WTC11 (cell line): ENCODE measurements at regions of chr7 and their contacts with region 1.

Region 1: DNA sequence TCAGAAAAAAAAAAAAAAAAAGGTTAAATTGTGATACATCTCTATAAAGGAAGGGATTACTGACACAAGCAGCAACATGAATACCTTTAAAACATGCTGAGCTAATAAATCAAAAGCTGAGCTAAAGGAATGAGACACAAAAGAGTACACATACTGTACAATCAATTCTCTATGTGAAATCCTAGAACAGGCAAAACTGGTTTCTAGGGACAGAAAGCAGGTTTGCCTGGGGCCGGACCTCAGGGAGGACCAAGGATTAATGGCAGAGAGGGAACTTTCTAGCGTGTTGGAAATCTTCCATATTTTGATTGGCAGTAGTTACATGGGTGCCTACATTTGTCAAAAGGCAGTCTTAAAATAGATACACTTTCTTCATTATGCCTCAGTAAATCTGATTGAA is 52.5 kb downstream of the KLRG2 start:
- DNase-seq: no peak
- ATAC-seq: no peak
- H3K4me3 Mint-ChIP-seq: no peak overlapping the region
- H3K27ac Mint-ChIP-seq: no peak overlapping the region
- H3K4me1 Mint-ChIP-seq: peaks cover 13% of the 10 kb centered on the region
- H3K27me3 Mint-ChIP-seq: no peaks in the 10 kb centered on the region
- CTCF ChIP-seq: no peak

Region 2: DNA sequence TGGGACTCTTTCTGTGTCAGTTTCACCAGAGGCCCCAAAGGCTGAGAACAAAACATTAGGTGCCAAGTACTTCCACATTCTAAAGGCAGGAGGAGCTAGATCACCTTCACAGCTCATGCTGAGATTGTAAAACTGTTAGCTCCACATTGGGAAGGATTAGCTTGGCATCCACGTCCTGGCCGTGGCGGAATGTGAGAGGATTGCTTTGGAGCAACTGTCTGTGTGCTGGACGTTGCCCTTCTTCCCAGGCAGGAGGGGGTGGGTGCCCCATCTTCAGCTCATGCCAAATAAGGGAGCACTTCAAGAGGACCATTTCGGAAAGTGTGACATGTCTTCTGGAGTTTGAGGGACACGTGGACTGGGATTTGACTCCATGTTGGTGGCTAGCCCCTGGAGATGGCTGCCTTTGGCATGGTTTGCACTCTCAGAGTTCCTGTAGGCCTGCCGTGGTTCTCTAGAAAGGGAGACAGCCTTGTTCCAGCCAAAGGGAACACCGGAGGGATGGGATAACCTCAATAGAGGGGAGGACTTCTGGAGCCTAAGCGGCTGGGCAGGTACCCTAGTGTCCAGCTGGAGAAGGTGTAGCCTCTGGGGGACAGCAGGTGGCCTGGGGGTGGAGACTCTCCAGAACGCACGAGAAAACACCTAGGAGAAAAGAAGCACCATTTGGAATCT is 109.8 kb before region 1 on chr7:
- CTCF ChIA-PET with region 1: interaction called, 21 read pairs
- POLR2A ChIA-PET with region 1: no interaction called
- DNase-seq: peak; percentile 18
- ATAC-seq: peak; percentile 77
- H3K4me3 Mint-ChIP-seq: no peak overlapping the region
- H3K27ac Mint-ChIP-seq: peak overlapping the region; percentile 63; the same call in 1 of the 2 replicates
- H3K4me1 Mint-ChIP-seq: peaks cover 8% of the 10 kb centered on the region
- H3K27me3 Mint-ChIP-seq: no peaks in the 10 kb centered on the region
- CTCF ChIP-seq: no peak

Region 3: DNA sequence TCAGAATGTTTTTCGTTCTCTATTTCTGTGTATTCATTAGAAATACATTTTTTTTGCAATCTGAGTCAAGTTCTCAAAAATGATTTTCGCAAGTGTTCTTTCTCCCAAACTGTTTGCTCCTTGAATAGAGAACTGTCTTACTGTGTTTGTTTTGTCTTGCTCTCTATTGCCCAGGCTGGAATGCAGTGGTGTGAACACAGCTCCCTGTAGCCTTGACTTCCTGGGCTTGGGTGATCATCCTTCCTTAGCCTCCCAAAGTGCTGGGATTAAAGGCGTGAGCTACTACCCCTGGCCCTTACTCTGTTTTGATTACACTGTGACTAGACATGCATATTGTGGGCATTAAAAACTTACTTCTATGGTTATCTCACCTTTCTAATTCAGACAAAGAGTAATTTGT is 14.6 kb before region 1 on chr7:
- CTCF ChIA-PET with region 1: interaction called, 43 read pairs
- POLR2A ChIA-PET with region 1: no interaction called
- DNase-seq: no peak
- ATAC-seq: no peak
- H3K4me3 Mint-ChIP-seq: no peak overlapping the region
- H3K27ac Mint-ChIP-seq: peak overlapping the region; percentile 66
- H3K4me1 Mint-ChIP-seq: no peaks in the 10 kb centered on the region
- H3K27me3 Mint-ChIP-seq: no peaks in the 10 kb centered on the region
- CTCF ChIP-seq: no peak

Region 4: DNA sequence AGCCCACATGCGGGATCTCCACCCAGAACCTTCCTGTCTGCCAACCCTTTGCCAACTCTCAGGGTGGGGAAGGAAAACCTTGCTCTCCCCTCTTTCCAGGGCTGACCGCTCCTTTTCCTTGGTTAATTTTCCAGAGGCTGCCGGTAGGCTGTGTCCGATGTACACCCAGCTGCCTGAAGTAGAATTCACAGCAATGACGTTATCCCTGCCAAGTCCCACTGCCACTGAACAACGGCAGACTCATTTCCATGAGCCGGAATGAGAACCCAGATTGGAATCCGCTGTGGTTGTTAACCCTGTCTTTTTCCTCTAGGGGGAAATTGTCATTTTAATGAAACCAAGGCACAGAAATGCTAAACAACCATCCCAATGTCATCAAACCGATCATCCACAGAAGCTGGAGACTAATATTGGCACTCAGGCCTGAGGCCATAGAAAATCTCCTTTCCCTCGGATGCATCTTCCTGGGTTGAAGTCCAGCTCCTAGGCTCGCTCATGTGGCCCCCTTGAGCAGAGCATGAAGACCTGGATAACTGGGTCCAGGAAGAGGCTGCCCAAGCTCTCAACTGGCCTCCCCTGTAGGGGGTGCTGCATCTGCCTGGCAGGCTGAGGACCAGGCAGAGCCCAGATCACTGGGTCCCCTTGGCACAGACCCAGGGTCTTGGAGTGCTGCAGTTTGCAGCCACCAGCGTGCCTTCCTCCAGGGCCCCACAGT is 22.1 kb after region 1 on chr7:
- CTCF ChIA-PET with region 1: interaction called, 34 read pairs
- POLR2A ChIA-PET with region 1: no interaction called
- DNase-seq: peak; percentile 35
- ATAC-seq: peak; percentile 70
- H3K4me3 Mint-ChIP-seq: no peak overlapping the region
- H3K27ac Mint-ChIP-seq: 0 out of 2 replicates have a peak overlapping the region, but pooled peaks have one; percentile 34
- H3K4me1 Mint-ChIP-seq: peaks cover 11% of the 10 kb centered on the region
- H3K27me3 Mint-ChIP-seq: no peaks in the 10 kb centered on the region
- CTCF ChIP-seq: no peak

Region 5: DNA sequence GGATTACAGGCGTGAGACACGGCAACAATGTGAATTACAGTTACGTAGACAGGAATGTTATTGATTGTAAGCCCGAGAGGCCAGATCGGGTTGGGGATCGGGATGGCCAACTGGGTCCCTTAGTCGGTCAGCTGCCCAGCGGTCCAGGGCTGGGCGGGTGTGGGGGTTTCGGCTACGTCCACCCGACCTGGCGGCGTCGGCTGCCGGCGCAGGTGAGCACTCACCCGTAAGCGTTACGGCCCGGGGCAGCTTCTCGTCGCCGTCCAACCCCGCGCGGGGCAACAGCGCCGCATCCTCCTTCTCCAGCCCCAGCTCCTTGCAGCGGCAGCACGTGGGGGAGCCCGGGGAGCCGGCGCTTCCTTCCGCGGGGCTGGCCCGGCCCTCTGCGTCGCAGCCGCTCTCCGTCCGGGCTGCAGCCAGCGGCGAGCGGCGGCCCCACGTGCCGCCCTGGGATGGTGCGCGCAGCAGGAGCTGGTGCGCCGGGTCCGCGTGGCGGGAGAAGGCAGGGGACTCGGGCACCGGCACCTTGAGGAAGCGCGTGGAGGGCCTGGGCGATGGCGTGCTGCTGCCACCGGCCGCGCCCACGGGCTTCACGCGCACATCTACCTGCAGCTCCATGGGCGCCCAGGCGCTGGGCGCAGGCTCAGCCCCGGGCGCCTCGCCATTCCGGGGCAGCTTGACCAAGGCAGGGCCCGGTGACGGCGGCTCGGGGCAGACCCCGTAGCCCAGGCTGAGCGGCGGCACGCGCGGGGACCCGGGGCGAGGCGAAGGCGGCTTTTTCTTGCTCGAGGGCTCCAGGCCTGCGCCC is 51.9 kb after region 1 on chr7:
- CTCF ChIA-PET with region 1: interaction called, 27 read pairs
- POLR2A ChIA-PET with region 1: interaction called, 7 read pairs
- DNase-seq: peak; percentile 64
- ATAC-seq: peak; percentile 10
- H3K4me3 Mint-ChIP-seq: peak overlapping the region; percentile 73
- H3K27ac Mint-ChIP-seq: no peak overlapping the region
- H3K4me1 Mint-ChIP-seq: peaks cover 12% of the 10 kb centered on the region
- H3K27me3 Mint-ChIP-seq: peaks cover 28% of the 10 kb centered on the region
- CTCF ChIP-seq: no peak

Region 6: DNA sequence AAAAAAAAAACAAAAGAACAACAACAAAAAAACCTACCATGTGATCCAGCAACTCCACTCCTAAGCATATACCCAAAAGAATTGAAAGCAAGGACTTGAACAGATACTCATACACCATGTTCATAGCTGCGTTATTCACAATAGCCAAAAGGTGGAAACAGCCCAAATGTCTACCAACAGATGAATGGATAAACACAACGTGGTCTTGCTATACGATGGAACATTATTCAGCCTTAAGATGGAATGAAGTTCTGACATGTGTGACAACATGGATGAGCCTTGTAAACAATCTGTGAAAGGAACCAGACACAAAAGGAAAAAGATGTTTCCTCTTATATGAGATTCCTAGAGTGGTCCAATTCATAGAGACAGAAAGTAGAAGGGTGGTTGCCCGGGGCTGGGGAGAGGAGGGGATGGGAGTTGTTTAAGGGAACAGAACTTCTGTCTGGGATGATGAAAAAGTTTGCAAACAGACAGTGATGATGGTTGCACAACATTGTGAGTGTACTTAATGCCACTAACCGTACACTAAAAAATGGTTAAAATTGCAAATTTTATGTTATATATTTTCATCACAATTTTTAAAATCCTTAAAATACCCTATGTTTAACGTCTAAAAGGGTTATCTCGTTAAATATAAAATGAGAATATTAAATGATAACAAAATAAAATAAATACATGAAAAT is 104.1 kb after region 1 on chr7:
- CTCF ChIA-PET with region 1: no interaction called
- POLR2A ChIA-PET with region 1: no interaction called
- DNase-seq: no peak
- ATAC-seq: no peak
- H3K4me3 Mint-ChIP-seq: no peak overlapping the region
- H3K27ac Mint-ChIP-seq: no peak overlapping the region
- H3K4me1 Mint-ChIP-seq: peaks cover 11% of the 10 kb centered on the region
- H3K27me3 Mint-ChIP-seq: peaks cover 5% of the 10 kb centered on the region
- CTCF ChIP-seq: no peak

Region 7: DNA sequence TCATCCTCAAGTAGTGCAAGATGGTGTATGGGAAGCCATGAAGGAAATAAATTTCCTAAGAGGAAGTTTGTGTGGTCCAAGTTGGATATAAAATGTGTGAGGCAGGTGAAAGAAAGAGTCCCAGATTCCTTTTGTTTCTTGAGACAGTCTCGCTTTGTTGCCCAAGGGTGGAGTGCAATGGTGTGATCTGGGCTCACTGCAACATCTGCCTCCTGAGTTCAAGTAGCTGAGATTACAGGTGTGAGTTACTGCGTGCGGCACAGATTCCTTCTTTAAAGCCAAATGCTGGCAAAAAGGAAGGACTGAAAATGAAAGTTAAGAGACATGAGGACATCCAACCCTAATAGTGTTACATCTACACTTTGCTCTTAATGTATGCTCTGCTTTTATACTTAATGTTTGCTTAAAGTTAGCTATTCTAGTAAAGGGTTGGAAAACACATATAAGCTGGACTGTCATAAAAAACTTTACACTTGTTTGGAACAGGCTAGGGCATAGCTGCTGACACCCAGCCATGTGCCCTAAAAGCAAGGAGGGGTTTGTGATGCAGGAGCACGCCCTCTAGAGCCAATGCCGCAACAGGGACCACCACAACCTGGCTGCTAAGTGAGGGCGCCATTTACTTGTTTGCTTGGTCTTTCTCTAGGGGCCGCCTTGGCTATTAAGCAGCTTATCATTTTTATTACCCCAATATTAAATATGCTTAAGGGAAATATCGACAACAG is 127.0 kb after region 1 on chr7:
- CTCF ChIA-PET with region 1: interaction called, 12 read pairs
- POLR2A ChIA-PET with region 1: no interaction called
- DNase-seq: peak; percentile 49
- ATAC-seq: peak; percentile 73
- H3K4me3 Mint-ChIP-seq: no peak overlapping the region
- H3K27ac Mint-ChIP-seq: no peak overlapping the region
- H3K4me1 Mint-ChIP-seq: peaks cover 18% of the 10 kb centered on the region
- H3K27me3 Mint-ChIP-seq: no peaks in the 10 kb centered on the region; the same call in 1 of the 2 replicates
- CTCF ChIP-seq: no peak

Region 8: DNA sequence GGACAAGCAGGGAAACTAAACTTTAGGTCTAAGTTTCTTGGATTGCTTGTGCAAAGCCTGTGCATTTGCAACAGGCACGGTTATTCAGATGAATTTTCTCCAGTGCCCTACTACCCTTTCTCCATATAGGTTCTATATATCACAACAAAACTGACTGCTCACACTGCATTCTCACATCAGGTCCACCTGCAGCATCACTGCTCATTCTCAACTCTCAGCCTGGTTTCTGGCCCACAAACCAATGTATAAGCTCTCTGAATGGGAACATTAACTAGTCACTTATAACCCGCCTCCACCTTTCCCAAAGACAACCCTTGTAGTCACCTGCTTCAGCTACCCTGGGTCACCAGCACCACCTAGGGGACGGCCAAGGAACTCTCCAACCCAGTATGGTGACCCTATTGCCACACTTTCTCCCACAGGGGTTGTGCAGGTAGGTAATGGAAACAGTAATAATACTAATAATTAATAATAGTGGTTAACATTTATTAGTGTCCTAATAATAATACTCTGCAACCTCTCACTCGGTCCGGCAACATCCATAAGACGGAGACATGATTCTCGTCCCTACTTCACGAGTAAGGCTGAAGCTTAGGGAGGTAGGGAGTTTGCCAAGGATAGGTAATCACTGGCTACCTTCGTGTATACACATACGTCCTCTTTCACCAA is 189.8 kb after region 1 on chr7:
- CTCF ChIA-PET with region 1: interaction called, 12 read pairs
- POLR2A ChIA-PET with region 1: no interaction called
- DNase-seq: peak; percentile 84
- ATAC-seq: peak; percentile 97
- H3K4me3 Mint-ChIP-seq: no peak overlapping the region
- H3K27ac Mint-ChIP-seq: no peak overlapping the region; the same call in 1 of the 2 replicates
- H3K4me1 Mint-ChIP-seq: no peaks in the 10 kb centered on the region
- H3K27me3 Mint-ChIP-seq: no peaks in the 10 kb centered on the region
- CTCF ChIP-seq: peak; percentile 67